Mammary epithelial cell (primary cell): ENCODE measurements at regions of chr6 and their contacts with region 1.

Region 1: GRCh38 chr6:133568970-133569889 is 319.7 kb upstream of the TCF21 start:
- DNase-seq: peak; percentile 92
- H3K4me3 ChIP-seq: peak overlapping the region; percentile 43 to 50 (median 46)
- H3K27ac ChIP-seq: peak overlapping the region; percentile 92
- H3K4me1 ChIP-seq: peaks cover 4% of the 10 kb centered on the region
- H3K27me3 ChIP-seq: peaks cover 2% of the 10 kb centered on the region
- CTCF ChIP-seq: peak; percentile 98

Region 2: GRCh38 chr6:133609404-133610270 is 40.4 kb after region 1 on chr6:
- CTCF ChIA-PET with region 1: no interaction called
- dilution Hi-C with region 1: no loop called
- in situ Hi-C with region 1: no loop called
- intact Hi-C with region 1: loop called (anchors 2 kb)
- DNase-seq: peak; percentile 97
- H3K4me3 ChIP-seq: no peak overlapping the region
- H3K27ac ChIP-seq: peak overlapping the region; percentile 81
- H3K4me1 ChIP-seq: peaks cover 15% of the 10 kb centered on the region
- H3K27me3 ChIP-seq: no peaks in the 10 kb centered on the region
- CTCF ChIP-seq: no peak

Region 3: DNA sequence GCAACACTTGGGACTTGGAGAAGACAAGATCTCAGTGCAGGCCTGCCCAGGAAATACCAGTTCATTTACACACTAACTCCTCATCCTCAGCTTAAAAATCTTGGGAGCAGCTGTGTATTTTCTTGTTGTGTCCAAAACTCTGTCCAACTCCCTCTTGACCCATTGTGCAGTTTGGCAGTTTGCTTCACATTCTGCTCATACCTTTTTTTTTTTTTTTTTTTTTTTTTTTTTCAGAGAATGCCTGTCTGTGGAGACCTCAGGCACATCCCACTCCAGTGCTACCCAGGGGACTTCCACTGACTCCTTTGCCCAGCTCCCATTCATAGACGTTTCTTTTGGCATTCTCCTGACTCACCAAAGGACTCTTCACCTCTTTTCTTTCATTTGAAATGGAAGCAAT is 53.8 kb after region 1 on chr6:
- CTCF ChIA-PET with region 1: no interaction called
- dilution Hi-C with region 1: no loop called
- in situ Hi-C with region 1: no loop called
- intact Hi-C with region 1: no loop called
- DNase-seq: no peak
- H3K4me3 ChIP-seq: no peak overlapping the region
- H3K27ac ChIP-seq: no peak overlapping the region
- H3K4me1 ChIP-seq: no peaks in the 10 kb centered on the region
- H3K27me3 ChIP-seq: no peaks in the 10 kb centered on the region
- CTCF ChIP-seq: no peak

Region 4: GRCh38 chr6:133671376-133671775 is 102.1 kb after region 1 on chr6:
- CTCF ChIA-PET with region 1: no interaction called
- dilution Hi-C with region 1: no loop called
- in situ Hi-C with region 1: no loop called
- intact Hi-C with region 1: no loop called
- DNase-seq: no peak
- H3K4me3 ChIP-seq: no peak overlapping the region
- H3K27ac ChIP-seq: no peak overlapping the region
- H3K4me1 ChIP-seq: no peaks in the 10 kb centered on the region
- H3K27me3 ChIP-seq: no peaks in the 10 kb centered on the region
- CTCF ChIP-seq: no peak

Region 5: DNA sequence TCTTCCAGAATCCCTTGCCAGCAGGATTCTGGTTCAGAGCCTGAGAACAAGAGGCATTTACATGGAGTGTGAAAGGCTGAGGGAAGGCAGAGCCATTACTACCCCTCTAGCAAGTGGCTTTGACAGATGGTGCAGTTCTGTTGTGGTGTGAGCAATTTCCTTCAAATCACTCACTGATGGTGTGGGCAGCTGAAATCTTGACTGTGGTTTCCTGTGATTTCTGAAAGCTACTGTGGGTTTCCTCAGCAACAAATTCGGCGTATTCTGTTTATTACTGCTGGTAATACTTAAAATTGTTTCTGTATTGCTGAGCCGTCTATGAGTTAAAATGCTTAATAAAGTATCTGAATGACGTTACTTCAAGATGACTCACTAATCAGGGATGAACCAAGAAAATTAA is 138.2 kb after region 1 on chr6:
- CTCF ChIA-PET with region 1: no interaction called
- dilution Hi-C with region 1: no loop called
- in situ Hi-C with region 1: no loop called
- intact Hi-C with region 1: loop called (anchors 5 kb)
- DNase-seq: peak; percentile 74
- H3K4me3 ChIP-seq: no peak overlapping the region
- H3K27ac ChIP-seq: no peak overlapping the region
- H3K4me1 ChIP-seq: peaks cover 24% of the 10 kb centered on the region
- H3K27me3 ChIP-seq: no peaks in the 10 kb centered on the region
- CTCF ChIP-seq: no peak

Region 6: GRCh38 chr6:133916650-133917151 is 347.5 kb after region 1 on chr6:
- CTCF ChIA-PET with region 1: interaction called, 28 read pairs
- dilution Hi-C with region 1: no loop called
- in situ Hi-C with region 1: loop called (anchors 5 kb)
- intact Hi-C with region 1: loop called (anchors 1 kb)
- DNase-seq: peak; percentile 63
- H3K4me3 ChIP-seq: no peak overlapping the region
- H3K27ac ChIP-seq: no peak overlapping the region
- H3K4me1 ChIP-seq: no peaks in the 10 kb centered on the region
- H3K27me3 ChIP-seq: no peaks in the 10 kb centered on the region
- CTCF ChIP-seq: peak; percentile 93 to 96

Region 7: DNA sequence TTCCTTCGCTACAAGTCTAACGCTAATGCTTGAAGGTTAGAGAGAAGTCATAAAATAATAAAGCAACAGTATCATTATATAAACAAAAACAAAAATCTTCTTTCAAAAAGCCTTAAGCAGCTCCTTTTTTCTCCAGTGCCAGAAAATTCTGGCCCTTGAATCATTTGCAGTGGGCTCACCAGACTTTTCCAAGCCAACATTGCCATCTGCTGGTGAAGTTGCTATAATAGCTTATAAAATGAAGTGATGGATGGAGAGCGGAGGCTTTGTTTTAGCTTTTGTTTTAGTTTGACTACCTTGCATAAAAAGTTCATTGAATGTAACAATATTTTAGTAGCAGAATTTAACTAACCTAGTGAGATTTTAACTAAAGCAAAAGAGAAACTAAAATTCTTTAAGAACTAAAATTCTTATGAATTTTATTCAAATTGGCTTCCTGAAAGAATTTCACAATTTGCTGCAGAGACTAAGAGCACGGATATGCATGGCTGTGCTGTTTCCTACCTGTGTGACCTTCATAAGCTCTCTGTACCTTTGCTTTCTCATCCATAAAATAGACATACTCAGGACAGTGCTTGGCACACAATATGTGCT is 528.0 kb after region 1 on chr6:
- CTCF ChIA-PET with region 1: no interaction called
- dilution Hi-C with region 1: loop called (anchors 25 kb)
- in situ Hi-C with region 1: loop called in 1 of 2 experiments (anchors 10 kb)
- intact Hi-C with region 1: loop called (anchors 2 kb)
- DNase-seq: peak; percentile 45
- H3K4me3 ChIP-seq: no peak overlapping the region
- H3K27ac ChIP-seq: no peak overlapping the region
- H3K4me1 ChIP-seq: no peaks in the 10 kb centered on the region
- H3K27me3 ChIP-seq: no peaks in the 10 kb centered on the region
- CTCF ChIP-seq: peak; percentile 41 to 60